Ovary (tissue), 10 donors: ENCODE measurements at regions of chr11 and their contacts with region 1.

Region 1: GRCh38 chr11:131674051-131674755 is 303.8 kb downstream of the NTM start:
- DNase-seq: peak; percentile 22 to 87 (median 52)
- H3K4me3 ChIP-seq: no peak overlapping the region
- H3K27ac ChIP-seq: no peak overlapping the region
- H3K4me1 ChIP-seq: no peaks in the 10 kb centered on the region
- H3K27me3 ChIP-seq: no peaks in the 10 kb centered on the region
- CTCF ChIP-seq: peak; percentile 38 to 81 (median 42)
- EP300 ChIP-seq: no peak
- POLR2A ChIP-seq: no peak

Region 2: GRCh38 chr11:130924770-130925169 is 749.4 kb before region 1 on chr11:
- intact Hi-C with region 1: loop called in 1 of 4 experiments (anchors 10 kb)
- DNase-seq: no peak
- H3K4me3 ChIP-seq: no peak overlapping the region
- H3K27ac ChIP-seq: no peak overlapping the region
- H3K4me1 ChIP-seq: no peaks in the 10 kb centered on the region
- H3K27me3 ChIP-seq: no peaks in the 10 kb centered on the region
- CTCF ChIP-seq: no peak
- EP300 ChIP-seq: no peak
- POLR2A ChIP-seq: no peak

Region 3: GRCh38 chr11:131710511-131710910 is 36.3 kb after region 1 on chr11:
- intact Hi-C with region 1: no loop called
- DNase-seq: no peak
- H3K4me3 ChIP-seq: no peak overlapping the region
- H3K27ac ChIP-seq: no peak overlapping the region
- H3K4me1 ChIP-seq: no peaks in the 10 kb centered on the region
- H3K27me3 ChIP-seq: no peaks in the 10 kb centered on the region
- CTCF ChIP-seq: no peak
- EP300 ChIP-seq: no peak
- POLR2A ChIP-seq: no peak

Region 4: GRCh38 chr11:132158093-132158492 is 483.9 kb after region 1 on chr11:
- intact Hi-C with region 1: no loop called
- DNase-seq: no peak
- H3K4me3 ChIP-seq: no peak overlapping the region
- H3K27ac ChIP-seq: no peak overlapping the region
- H3K4me1 ChIP-seq: no peaks in the 10 kb centered on the region
- H3K27me3 ChIP-seq: no peaks in the 10 kb centered on the region
- CTCF ChIP-seq: no peak
- EP300 ChIP-seq: no peak
- POLR2A ChIP-seq: no peak